ENCODE measurements at regions of chr3 and their contacts with region 1.

Region 1: GRCh38 chr3:17775073-17775472 is 32.6 kb upstream of the TBC1D5 start:
- DNase-seq: no peak
- ATAC-seq: no peak
- H3K4me3 ChIP-seq: no peak overlapping the region
- H3K27ac ChIP-seq: no peak overlapping the region
- H3K4me1 ChIP-seq: no peaks in the 10 kb centered on the region
- H3K27me3 ChIP-seq: no peaks in the 10 kb centered on the region
- CTCF ChIP-seq: no peak
- POLR2A ChIP-seq: no peak
- RAD21 ChIP-seq: no peak

Region 2: DNA sequence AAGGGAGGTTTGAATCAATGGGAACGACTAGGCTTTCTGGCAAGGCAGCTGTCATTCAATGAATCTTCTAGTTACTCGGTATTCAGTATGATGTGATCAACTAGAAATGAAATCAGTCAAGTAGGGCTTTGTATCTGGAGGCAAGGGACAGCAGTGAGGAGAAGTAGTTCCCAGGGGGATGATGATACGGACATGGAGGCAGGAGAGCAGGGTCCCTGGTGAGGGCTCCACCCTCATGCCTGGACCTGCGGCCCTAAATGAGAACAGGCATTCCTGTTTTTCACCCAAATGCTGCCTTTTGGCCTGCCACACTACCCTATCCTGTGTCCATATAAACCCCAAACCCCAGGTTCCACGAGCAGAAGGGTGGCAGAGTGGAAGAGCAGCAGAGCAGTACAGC is 992.0 kb before region 1 on chr3:
- CTCF ChIA-PET with region 1: no interaction called
- POLR2A ChIA-PET with region 1: no interaction called
- dilution Hi-C with region 1: no loop called
- in situ Hi-C with region 1: no loop called
- intact Hi-C with region 1: no loop called
- DNase-seq: no peak
- ATAC-seq: no peak
- H3K4me3 ChIP-seq: no peak overlapping the region
- H3K27ac ChIP-seq: no peak overlapping the region
- H3K4me1 ChIP-seq: no peaks in the 10 kb centered on the region
- H3K27me3 ChIP-seq: no peaks in the 10 kb centered on the region; the same call in 1 of the 2 replicates
- CTCF ChIP-seq: no peak
- POLR2A ChIP-seq: no peak
- RAD21 ChIP-seq: no peak

Region 3: DNA sequence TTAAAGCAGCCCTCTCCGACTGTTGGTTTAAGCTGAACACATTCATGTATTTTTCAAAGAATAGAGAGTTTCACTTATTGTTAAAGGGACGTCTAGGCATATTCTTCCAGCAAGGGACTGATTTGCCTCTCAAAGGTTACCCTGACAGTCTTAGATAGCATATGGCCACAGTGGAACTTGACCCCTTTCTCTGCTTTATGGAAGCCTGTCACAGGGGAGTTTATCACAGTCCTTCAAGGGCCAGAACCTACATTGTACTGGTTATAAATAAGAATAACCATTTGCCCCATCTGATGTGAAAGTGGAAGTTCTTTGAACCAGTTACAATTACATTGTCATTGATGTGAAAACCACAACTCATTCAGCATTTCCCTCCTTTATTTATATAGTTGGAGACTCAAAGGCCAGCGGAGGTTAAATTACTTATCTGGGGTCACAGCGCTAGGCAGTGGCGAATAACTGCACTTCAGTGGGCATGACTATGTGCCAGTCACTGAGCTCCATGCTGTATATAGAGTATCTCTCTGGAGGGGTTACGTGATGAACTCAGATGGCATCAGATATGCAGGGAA is 27.8 kb after region 1 on chr3:
- CTCF ChIA-PET with region 1: no interaction called
- POLR2A ChIA-PET with region 1: no interaction called
- dilution Hi-C with region 1: no loop called
- in situ Hi-C with region 1: no loop called
- intact Hi-C with region 1: no loop called
- DNase-seq: no peak
- ATAC-seq: no peak
- H3K4me3 ChIP-seq: no peak overlapping the region
- H3K27ac ChIP-seq: no peak overlapping the region
- H3K4me1 ChIP-seq: no peaks in the 10 kb centered on the region
- H3K27me3 ChIP-seq: no peaks in the 10 kb centered on the region; the same call in 1 of the 2 replicates
- CTCF ChIP-seq: no peak
- POLR2A ChIP-seq: no peak
- RAD21 ChIP-seq: no peak

Region 4: GRCh38 chr3:17820704-17821103 is 45.6 kb after region 1 on chr3:
- CTCF ChIA-PET with region 1: no interaction called
- POLR2A ChIA-PET with region 1: no interaction called
- dilution Hi-C with region 1: no loop called
- in situ Hi-C with region 1: no loop called
- intact Hi-C with region 1: loop called (anchors 1 kb)
- DNase-seq: no peak
- ATAC-seq: no peak
- H3K4me3 ChIP-seq: no peak overlapping the region
- H3K27ac ChIP-seq: no peak overlapping the region
- H3K4me1 ChIP-seq: no peaks in the 10 kb centered on the region
- H3K27me3 ChIP-seq: no peaks in the 10 kb centered on the region; the same call in 1 of the 2 replicates
- CTCF ChIP-seq: no peak
- POLR2A ChIP-seq: no peak
- RAD21 ChIP-seq: no peak

Measured in IMR-90 (cell line).